ENCODE measurements at regions of chr4 and their contacts with region 1.

Region 1: DNA sequence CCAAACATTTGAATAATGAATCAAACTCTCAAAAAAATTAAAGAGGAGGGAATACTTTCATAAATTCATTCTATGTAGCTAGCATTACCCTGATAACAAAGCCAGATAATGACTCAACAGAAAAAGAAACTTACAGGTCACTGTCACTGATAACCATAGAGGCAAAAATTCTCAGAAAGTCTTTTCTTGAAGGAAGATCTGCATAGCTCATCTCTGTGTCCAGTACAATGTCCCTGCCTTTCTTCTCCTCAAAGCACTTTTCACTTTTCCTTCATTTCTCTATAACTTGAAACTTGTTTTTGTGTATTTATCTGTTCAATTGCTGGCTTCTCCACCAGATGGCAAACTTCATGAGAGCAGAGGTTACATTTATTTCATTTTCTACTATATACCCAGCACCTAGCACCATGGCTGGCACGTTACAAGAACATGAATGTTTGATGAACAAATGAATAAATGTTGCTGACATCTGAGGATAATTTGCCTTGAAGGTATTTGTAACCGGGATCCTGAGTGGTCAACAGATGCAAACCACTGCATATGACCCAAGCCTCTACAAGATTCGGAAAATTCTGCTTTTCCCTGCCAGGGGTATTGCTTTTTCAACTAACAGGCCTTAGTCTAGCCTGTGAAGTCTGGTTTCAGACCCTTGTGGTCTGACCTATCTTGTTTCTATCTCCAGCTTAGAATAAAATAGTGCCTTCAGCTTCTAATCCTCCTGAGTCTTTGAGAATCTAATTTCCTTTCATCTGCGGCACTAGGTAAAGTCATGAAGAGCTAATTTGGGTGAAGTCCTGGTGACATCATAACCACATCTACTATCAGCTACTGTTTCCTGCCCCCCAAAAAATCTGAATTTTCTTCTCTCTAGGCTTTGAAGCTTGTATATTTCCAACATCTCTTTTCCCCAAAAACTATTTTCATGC is 52.5 kb upstream of the ANTXR2 start:
- DNase-seq: peak; percentile 50
- H3K4me3 Mint-ChIP-seq: peak overlapping the region; percentile 28
- H3K27ac Mint-ChIP-seq: peak overlapping the region; percentile 88
- H3K4me1 Mint-ChIP-seq: peaks cover 63% of the 10 kb centered on the region
- H3K27me3 Mint-ChIP-seq: no peaks in the 10 kb centered on the region

Region 2: DNA sequence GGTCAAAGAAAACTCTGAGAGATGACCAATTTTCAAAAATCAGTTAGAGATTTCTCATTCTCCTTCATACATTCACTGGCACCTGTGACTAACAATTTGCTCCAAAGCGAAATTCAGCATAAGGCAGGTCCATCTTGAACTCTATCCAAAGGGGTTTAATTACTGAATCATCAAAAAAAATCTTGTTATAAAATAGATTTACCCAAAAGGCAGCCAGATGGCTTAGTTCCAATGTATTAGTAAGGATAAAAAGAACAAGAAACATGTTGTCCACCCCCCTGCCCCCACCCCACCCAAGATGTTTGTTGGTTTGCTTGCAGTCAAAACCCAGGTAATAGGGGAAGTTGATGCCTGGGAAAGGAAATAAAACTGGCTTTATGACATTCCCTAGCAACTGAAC is 252.8 kb before region 1 on chr4:
- CTCF ChIA-PET with region 1: no interaction called
- POLR2A ChIA-PET with region 1: no interaction called
- DNase-seq: no peak
- H3K4me3 Mint-ChIP-seq: no peak overlapping the region
- H3K27ac Mint-ChIP-seq: no peak overlapping the region
- H3K4me1 Mint-ChIP-seq: no peaks in the 10 kb centered on the region
- H3K27me3 Mint-ChIP-seq: peaks cover 4% of the 10 kb centered on the region

Region 3: GRCh38 chr4:80072744-80073472 is 52.6 kb before region 1 on chr4 and contains the start of gene ANTXR2:
- CTCF ChIA-PET with region 1: interaction called, 18 read pairs
- POLR2A ChIA-PET with region 1: interaction called, 47 read pairs
- DNase-seq: peak; percentile 83
- H3K4me3 Mint-ChIP-seq: peak within 1 kb of the TSS; percentile 87
- H3K27ac Mint-ChIP-seq: peak within 1 kb of the TSS; percentile 92
- H3K4me1 Mint-ChIP-seq: peaks cover 73% of the 10 kb centered on the region
- H3K27me3 Mint-ChIP-seq: no peaks in the 10 kb centered on the region
- total RNA-seq, gene ANTXR2: 113 to 114 TPM

Region 4: DNA sequence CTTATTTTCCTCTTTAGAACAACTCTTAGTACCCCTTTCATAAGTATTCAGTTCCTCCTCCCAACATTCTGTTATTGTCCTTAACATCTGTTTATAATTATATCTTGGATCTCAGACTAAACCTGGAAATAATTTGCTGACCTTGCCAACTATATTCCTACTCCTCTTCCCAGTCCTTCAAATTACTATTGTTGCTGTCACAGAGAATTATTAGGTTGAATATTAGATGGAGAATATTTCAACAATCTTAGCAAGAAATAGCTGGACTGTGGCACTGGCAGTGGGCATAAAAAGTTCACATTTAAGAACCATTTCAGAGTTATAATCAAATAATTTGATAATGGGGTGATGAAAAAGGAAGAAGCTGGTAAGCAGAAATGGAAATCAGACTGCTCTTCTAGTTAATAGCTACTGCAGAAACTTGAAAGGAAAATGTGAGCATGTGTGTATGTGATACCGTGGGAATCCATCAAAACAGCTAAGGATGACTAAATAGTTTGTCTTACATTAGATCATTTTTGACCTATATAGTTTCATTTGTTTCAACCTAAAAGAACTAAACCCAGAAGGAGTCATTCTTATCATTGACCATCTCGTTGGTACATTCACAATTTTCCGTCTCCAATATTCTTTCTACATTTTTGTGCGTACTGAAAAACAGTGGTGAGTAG is 28.5 kb after region 1 on chr4:
- CTCF ChIA-PET with region 1: interaction called, 10 read pairs
- POLR2A ChIA-PET with region 1: no interaction called
- DNase-seq: no peak
- H3K4me3 Mint-ChIP-seq: no peak overlapping the region
- H3K27ac Mint-ChIP-seq: peak overlapping the region; percentile 9
- H3K4me1 Mint-ChIP-seq: peaks cover 10% of the 10 kb centered on the region
- H3K27me3 Mint-ChIP-seq: peaks cover 2% of the 10 kb centered on the region

Region 5: DNA sequence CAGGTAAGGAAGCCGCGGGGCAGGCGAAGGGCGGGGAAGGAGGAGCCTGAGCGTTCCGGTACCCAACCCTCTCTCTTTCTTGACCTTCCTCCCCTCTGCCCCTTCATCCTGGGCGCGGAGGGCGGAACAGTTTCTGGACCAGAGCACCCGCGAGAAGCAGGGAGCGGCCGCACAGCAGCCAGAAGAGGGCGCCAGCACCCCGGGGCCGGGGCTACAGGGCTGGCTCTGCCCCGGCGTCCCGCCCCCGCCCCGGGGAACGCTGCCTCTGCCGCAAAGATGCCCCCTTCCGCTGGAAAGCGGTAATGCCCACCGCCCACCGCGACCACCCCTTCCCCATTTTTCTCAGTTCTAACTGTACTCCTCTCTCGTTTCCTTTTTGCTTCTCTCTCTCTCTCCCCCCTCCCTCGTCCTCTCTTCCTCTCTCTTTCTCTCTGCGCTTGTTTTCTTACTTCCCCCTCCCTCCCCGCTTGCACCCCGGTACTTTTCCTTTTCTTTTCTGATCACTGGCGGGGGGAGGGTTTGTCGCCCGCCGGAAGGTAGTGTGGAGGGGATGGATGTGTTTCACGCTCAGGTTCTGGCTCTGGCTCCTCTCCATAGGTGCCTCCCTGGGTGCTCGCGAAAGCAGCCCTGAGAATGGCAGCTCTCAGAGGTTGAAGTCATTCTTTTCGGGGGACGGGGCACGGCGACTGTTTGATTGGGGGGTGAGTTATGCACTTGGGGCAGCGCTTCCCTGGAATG is 58.7 kb after region 1 on chr4:
- CTCF ChIA-PET with region 1: interaction called, 141 read pairs
- POLR2A ChIA-PET with region 1: interaction called, 131 read pairs
- DNase-seq: peak; percentile 95
- H3K4me3 Mint-ChIP-seq: peak overlapping the region; percentile 99
- H3K27ac Mint-ChIP-seq: peak overlapping the region; percentile 97
- H3K4me1 Mint-ChIP-seq: peaks cover 53% of the 10 kb centered on the region
- H3K27me3 Mint-ChIP-seq: peaks cover 6% of the 10 kb centered on the region

Region 6: GRCh38 chr4:80202190-80202711 is 76.7 kb after region 1 on chr4:
- CTCF ChIA-PET with region 1: interaction called, 31 read pairs
- POLR2A ChIA-PET with region 1: interaction called, 33 read pairs
- DNase-seq: peak; percentile 80
- H3K4me3 Mint-ChIP-seq: peak overlapping the region; percentile 76
- H3K27ac Mint-ChIP-seq: peak overlapping the region; percentile 67
- H3K4me1 Mint-ChIP-seq: peaks cover 28% of the 10 kb centered on the region
- H3K27me3 Mint-ChIP-seq: peaks cover 11% of the 10 kb centered on the region